AG04450 (cell line): ENCODE measurements at regions of chr2 and their contacts with region 1.

Region 1: DNA sequence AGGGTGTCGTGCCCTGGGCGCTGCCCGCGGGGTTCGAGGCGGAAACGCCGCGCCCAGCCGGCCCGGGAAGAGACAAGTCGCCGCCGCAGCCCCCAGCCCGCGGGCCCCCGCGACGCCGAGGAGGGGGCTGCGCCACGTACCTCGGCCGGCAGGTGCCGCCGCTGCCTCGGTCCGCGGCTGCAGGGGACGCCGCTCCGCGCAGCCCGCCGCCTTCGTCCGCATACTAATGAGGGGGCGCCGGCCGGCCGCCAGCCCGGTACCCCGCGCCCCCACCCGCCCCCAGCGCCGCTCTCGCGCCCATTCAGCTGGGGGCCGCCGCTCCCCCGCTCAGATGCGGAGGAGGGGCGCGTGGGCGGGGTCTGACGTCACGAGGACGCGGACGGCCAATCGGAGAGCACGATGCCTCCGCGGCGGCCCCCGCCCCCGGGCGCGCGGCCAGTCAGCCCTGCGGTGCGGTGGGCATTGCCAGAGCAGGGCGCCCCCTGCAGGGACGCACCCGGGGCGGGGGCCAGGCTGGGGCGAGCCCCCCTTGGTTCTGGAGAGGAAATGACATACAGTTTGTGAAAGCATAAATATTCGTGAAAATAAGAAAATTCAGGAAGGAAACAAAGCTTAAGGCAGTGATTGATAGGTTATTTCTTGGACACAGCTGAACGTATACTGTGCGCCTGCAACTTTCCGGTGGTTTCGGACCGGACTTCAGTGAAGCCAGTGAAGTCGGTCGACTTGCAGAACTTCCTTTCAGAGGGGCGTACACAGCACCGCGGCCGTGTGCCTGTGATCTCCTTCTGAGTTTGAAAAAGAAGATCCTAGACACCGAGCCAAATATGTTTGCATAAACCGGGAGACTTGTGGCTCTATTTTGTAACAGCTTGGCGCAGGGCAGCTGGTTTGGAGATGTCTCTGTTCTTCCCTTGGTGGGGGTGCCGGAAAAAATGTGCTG is at the start of gene ST3GAL5:
- DNase-seq: no peak
- H3K4me3 ChIP-seq: peak within 1 kb of the TSS; percentile 73
- H3K27ac ChIP-seq: peak within 1 kb of the TSS; percentile 58
- H3K27me3 ChIP-seq: no peaks in the 10 kb centered on the region
- CTCF ChIP-seq: peak; percentile 75
- polyA plus RNA-seq, gene ST3GAL5: 22.3 and 26.8 TPM in 2 replicates

Region 2: GRCh38 chr2:85792783-85793441 is 96.0 kb before region 1 on chr2:
- CTCF ChIA-PET with region 1: no interaction called
- POLR2A ChIA-PET with region 1: no interaction called
- DNase-seq: peak; percentile 43
- H3K4me3 ChIP-seq: no peak overlapping the region
- H3K27ac ChIP-seq: peak overlapping the region; percentile 58
- H3K27me3 ChIP-seq: no peaks in the 10 kb centered on the region
- CTCF ChIP-seq: no peak

Region 3: GRCh38 chr2:85878719-85879385 is 10.1 kb before region 1 on chr2:
- CTCF ChIA-PET with region 1: interaction called, 12 read pairs
- POLR2A ChIA-PET with region 1: no interaction called
- DNase-seq: no peak
- H3K4me3 ChIP-seq: no peak overlapping the region
- H3K27ac ChIP-seq: no peak overlapping the region
- H3K27me3 ChIP-seq: no peaks in the 10 kb centered on the region
- CTCF ChIP-seq: no peak

Region 4: DNA sequence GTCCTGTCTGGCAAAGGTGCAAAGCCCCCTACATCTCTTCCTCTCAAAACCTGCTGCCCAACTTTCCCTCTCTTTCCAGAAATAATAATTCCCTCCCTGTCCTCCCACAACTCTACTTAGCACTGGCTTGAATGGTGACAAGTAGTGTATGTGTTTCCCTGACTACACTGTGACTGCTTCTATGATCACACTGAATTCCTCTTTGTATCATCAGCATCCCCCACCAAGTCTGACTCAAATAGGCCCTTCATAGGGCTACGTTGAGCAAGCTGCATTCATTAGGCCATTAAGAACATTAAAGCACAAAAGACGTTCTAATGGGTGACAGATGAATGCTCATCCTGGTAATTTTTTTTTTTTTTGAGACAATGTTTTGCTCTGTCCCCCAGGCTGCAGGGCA is 13.5 kb after region 1 on chr2:
- CTCF ChIA-PET with region 1: interaction called, 12 read pairs
- POLR2A ChIA-PET with region 1: interaction called, 3 read pairs
- DNase-seq: no peak
- H3K4me3 ChIP-seq: no peak overlapping the region
- H3K27ac ChIP-seq: no peak overlapping the region
- H3K27me3 ChIP-seq: peaks cover 4% of the 10 kb centered on the region
- CTCF ChIP-seq: no peak

Region 5: DNA sequence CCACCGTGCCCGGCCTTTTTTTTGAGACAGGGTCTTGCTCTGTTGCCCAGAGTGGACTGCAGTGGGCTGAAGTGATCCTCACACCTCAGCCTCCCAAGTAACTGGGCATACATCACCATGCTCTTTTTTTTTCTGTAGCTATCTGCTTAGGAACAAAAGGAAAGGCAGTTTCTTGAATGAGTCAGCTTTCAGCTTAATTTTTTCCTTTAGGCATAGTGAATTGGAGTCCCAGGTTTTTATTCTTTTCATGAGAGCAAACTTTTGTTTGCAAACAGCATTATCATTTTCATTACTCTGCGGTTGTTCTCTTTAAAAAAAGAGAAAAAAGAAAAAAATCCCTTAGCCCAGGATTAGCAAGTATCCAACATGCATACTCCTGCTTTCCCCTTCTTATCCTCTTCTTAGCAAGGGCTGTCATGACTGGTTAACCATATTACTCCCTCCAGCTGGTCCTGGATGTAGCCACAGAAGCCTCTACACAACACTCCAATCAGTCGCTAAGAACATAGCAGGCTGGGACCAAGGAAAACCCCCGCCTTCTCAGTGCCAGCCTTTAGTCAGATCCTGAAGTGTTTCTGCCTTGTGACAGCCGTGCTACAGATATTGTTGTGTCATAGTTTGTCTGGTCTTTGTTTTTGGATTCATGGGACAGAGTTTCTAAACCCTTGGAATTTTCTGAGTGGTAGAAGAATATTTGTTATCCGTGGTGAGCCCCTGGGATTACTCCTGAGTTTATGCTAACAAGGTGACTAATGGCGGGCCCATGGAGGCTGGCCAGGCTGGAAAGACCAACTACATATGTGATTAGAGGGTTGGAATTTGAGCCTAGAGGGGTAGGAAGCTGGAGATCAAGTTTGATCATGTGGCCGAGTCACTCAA is 23.1 kb after region 1 on chr2:
- CTCF ChIA-PET with region 1: interaction called, 11 read pairs
- POLR2A ChIA-PET with region 1: interaction called, 4 read pairs
- DNase-seq: no peak
- H3K4me3 ChIP-seq: no peak overlapping the region
- H3K27ac ChIP-seq: peak overlapping the region; percentile 93
- H3K27me3 ChIP-seq: no peaks in the 10 kb centered on the region
- CTCF ChIP-seq: no peak

Region 6: GRCh38 chr2:85994421-85994777 is 105.4 kb after region 1 on chr2:
- CTCF ChIA-PET with region 1: interaction called, 10 read pairs
- POLR2A ChIA-PET with region 1: interaction called, 4 read pairs
- DNase-seq: no peak
- H3K4me3 ChIP-seq: no peak overlapping the region
- H3K27ac ChIP-seq: no peak overlapping the region
- H3K27me3 ChIP-seq: no peaks in the 10 kb centered on the region
- CTCF ChIP-seq: no peak

Region 7: GRCh38 chr2:86035883-86036668 is 147.1 kb after region 1 on chr2:
- CTCF ChIA-PET with region 1: interaction called, 8 read pairs
- POLR2A ChIA-PET with region 1: interaction called, 25 read pairs
- DNase-seq: peak; percentile 76
- H3K4me3 ChIP-seq: 0 out of 2 replicates have a peak overlapping the region, but pooled peaks have one; percentile 4
- H3K27ac ChIP-seq: peak overlapping the region; percentile 96
- H3K27me3 ChIP-seq: no peaks in the 10 kb centered on the region
- CTCF ChIP-seq: peak; percentile 47

Region 8: DNA sequence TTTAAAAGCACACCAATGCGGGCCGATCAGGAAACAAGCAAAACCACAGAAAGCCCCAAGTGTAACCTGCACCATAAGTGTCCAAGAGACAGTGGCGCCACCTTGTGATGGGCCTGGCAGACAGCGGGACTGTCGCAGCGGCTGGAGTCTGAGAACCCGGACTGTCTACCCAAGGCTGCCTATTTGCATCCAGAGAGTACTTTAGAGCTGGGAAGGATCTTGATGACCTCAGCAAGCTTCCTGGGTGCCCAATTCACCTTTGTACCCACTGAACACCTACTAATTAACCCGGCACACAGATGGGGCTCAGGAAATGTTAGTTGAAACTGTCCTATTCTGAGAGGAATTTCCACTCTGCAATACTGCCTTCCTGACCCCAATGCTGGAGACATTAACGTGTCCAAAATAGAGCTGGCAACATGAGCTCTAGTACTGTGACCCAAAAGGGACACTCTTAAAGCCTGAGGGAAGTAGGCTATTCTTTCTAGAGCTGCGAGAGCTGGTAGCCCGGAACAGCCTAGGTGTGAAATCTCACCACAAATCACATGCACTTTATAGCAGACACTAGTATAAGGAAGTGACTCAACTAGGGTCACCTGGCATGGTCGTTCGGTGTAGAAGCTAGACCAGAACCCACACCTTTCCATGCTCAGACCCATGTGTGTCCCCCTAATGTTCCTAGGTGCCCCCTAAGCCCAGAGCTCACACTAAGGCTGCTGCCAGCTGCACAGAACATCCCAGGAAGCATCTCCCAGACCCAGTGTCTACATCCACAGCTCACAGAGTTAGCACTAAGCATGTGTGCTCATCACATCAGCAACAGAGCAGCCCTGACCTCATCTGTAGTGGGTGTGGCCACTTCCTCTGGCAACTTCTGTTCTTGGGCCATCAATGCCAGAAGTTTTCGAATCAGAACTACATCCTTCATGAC is 191.3 kb after region 1 on chr2:
- CTCF ChIA-PET with region 1: interaction called, 26 read pairs
- POLR2A ChIA-PET with region 1: no interaction called
- DNase-seq: peak; percentile 21
- H3K4me3 ChIP-seq: no peak overlapping the region
- H3K27ac ChIP-seq: no peak overlapping the region
- H3K27me3 ChIP-seq: no peaks in the 10 kb centered on the region
- CTCF ChIP-seq: peak; percentile 84

Region 9: DNA sequence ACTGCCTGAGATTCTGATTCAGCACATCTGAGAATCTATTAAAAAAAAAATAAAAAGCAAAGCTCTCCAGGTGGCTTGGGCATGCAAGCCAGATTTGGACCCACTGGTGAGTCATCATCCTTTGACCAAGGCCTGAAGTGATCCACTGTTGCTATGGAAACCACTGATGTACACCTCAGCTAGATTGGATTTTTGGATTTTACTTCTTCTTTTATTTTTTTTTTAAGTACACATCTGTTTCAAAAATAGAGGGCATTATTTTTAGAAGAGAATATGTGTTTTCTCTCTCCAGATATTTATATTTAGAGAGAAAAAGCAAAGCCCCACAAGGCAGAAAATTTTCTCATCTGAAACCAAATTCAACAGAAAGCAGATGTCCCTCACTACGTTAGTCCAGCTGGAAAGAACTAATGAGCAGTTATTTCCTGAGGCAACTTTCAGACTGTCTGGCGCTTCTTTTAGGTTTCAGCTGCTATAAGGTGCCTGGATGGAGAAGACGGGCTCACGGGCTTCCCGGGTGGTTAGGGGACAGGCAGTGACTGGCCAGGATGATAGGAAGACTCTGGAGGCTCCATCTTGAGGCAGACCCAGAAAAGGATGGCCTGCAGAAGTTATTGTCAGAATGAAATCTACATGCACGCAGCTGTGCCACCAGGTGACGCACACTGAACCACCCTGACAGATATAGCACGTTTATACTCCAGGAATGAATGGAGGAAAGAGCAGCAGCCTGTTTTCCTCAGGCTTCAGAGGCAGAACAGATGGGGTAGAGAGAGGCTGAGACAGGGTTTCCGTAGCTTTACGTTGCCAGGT is 360.8 kb after region 1 on chr2:
- CTCF ChIA-PET with region 1: no interaction called
- POLR2A ChIA-PET with region 1: no interaction called
- DNase-seq: peak; percentile 57
- H3K4me3 ChIP-seq: no peak overlapping the region
- H3K27ac ChIP-seq: peak overlapping the region; percentile 42
- H3K27me3 ChIP-seq: peaks cover 21% of the 10 kb centered on the region
- CTCF ChIP-seq: no peak